Naive thymus-derived CD4-positive, alpha-beta T cell (primary cell): ENCODE measurements at regions of chr5 and their contacts with region 1.

Region 1: DNA sequence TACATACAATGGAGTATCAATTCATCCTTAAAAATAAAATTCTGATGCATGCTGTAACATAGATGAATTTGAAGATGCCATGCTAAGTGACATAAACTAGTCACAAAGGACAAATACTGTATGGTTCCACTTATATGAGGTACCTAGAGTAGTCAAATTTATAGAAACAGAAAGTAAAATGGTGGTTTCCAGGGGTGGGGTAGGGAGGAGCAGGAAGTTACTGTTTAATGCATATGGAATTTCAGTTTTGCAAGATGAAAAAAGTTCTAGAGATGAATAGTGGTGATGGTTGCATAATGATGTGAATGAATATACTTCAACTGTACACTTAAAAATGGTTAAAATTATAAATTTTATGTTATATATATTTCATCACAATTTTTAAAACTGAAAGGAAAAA is 57.3 kb upstream of the FNIP1 start:
- DNase-seq: peak in 2 of 9 donors; percentile 3 to 4
- ATAC-seq: no peak
- H3K4me3 ChIP-seq: no peak overlapping the region
- H3K4me3 Mint-ChIP-seq: peak overlapping the region in 4 of 10 donors; percentile 6 to 72 (median 21)
- H3K27ac ChIP-seq: no peak overlapping the region
- H3K27ac Mint-ChIP-seq: peak overlapping the region in 3 of 9 donors; percentile 2 to 50 (median 17)
- H3K4me1 ChIP-seq: peaks cover 4 to 5% of the 10 kb centered on the region in 2 donors
- H3K4me1 Mint-ChIP-seq: peaks cover 14 to 26% (median 20%) of the 10 kb centered on the region in 7 donors
- H3K27me3 ChIP-seq: no peaks in the 10 kb centered on the region
- H3K27me3 Mint-ChIP-seq: peaks cover 0 to 18% (median 0%) of the 10 kb centered on the region in 5 donors

Region 2: DNA sequence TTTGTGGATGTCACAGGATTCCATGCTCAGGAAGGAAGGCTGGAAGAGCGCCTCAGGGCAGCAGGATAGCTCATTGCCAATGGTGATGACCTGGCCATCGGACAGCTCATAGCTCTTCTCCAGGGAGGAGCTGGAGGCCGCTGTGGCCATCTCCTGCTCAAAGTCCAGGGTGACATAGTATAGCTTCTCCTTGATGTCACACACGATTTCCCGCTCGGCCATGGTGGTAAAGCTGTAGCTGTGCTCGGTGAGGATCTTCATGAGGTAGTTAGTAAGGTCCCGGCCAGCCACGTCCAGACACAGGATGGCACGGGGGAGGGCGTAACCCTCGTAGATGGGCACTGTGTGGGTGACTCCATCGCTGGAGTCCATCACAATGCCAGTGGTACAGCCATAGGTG is 194.8 kb before region 1 on chr5:
- CTCF ChIA-PET with region 1: no interaction called
- POLR2A ChIA-PET with region 1: no interaction called
- intact Hi-C with region 1: no loop called
- DNase-seq: no peak
- ATAC-seq: no peak
- H3K4me3 ChIP-seq: no peak overlapping the region
- H3K4me3 Mint-ChIP-seq: no peak overlapping the region
- H3K27ac ChIP-seq: no peak overlapping the region
- H3K27ac Mint-ChIP-seq: no peak overlapping the region
- H3K4me1 ChIP-seq: no peaks in the 10 kb centered on the region
- H3K4me1 Mint-ChIP-seq: peaks cover 3 to 22% (median 7%) of the 10 kb centered on the region in 7 donors
- H3K27me3 ChIP-seq: no peaks in the 10 kb centered on the region
- H3K27me3 Mint-ChIP-seq: no peaks in the 10 kb centered on the region

Region 3: DNA sequence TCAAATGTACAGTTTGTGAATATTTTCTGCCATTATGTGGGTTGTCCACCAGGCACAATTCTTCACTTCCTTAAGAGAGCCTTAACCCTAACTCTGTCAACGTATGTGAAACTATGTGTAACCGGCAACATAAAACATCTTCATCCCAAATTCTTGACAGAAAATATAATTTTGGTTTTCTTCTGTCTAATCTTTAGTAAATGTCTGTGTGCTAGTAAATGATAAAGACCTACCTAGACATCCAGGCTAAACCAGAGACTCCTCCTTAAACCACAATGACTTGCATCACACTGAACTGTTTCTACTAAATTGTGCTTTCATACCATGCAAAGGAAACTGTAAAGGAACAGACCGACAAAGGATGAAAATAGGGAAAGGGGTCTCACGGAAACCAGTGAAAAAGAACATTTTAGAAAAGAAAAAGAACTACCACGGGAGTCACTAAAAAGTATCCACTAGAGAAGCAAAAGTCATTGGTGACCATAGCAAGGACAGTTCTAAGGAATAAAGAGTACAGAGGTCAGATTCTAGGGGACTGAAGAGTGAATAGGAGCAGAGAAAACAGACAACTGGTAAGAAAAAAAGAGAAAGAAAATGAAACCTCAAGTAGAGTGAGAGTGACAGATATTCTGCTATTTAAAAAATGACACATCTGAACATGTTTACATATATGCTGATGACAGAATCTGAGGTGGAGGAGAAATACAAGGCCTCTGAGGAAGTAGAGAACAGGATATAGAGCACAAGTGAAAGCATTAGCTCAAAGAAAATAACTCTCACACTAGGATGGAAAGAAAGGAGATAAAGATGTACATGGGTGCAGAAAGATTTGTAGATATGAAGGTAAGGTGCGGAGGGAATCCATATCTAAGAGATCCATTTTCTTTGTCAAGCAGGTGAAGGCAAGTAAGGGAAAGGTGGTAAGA is 106.7 kb before region 1 on chr5:
- CTCF ChIA-PET with region 1: no interaction called
- POLR2A ChIA-PET with region 1: no interaction called
- intact Hi-C with region 1: loop called in 1 of 2 experiments (anchors 5 kb)
- DNase-seq: peak in 7 of 9 donors; percentile 21 to 64 (median 48)
- ATAC-seq: peak; percentile 80
- H3K4me3 ChIP-seq: no peak overlapping the region
- H3K4me3 Mint-ChIP-seq: peak overlapping the region; percentile 14 to 80 (median 68)
- H3K27ac ChIP-seq: peak overlapping the region; percentile 63
- H3K27ac Mint-ChIP-seq: peak overlapping the region; percentile 84 to 96 (median 89)
- H3K4me1 ChIP-seq: peaks cover 10 to 11% of the 10 kb centered on the region in 2 donors
- H3K4me1 Mint-ChIP-seq: peaks cover 28 to 57% (median 51%) of the 10 kb centered on the region in 7 donors
- H3K27me3 ChIP-seq: no peaks in the 10 kb centered on the region
- H3K27me3 Mint-ChIP-seq: no peaks in the 10 kb centered on the region

Region 4: DNA sequence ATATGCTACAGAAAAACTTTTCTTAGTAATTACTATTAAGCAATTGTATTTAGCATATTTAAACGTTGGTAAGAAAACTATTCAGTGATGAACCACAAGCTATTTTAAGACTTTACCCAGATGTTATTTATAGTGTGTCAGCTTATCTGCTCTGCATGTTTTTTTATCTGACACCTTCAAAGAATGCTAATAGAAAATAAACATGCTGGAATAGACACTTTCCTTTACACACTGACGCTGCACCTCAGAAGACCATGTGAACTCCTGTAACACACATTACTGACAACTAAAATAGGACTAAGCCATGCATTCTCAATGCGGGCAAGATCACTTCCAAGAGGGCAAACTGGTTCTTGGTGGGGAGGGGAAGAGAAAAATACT is 95.6 kb before region 1 on chr5:
- CTCF ChIA-PET with region 1: no interaction called
- POLR2A ChIA-PET with region 1: no interaction called
- intact Hi-C with region 1: no loop called
- DNase-seq: no peak
- ATAC-seq: no peak
- H3K4me3 ChIP-seq: no peak overlapping the region
- H3K4me3 Mint-ChIP-seq: peak overlapping the region in 6 of 10 donors; percentile 2 to 66 (median 24)
- H3K27ac ChIP-seq: no peak overlapping the region
- H3K27ac Mint-ChIP-seq: peak overlapping the region in 6 of 9 donors; percentile 2 to 72 (median 42)
- H3K4me1 ChIP-seq: peaks cover 0 to 13% of the 10 kb centered on the region in 2 donors
- H3K4me1 Mint-ChIP-seq: peaks cover 15 to 56% (median 34%) of the 10 kb centered on the region in 7 donors
- H3K27me3 ChIP-seq: no peaks in the 10 kb centered on the region
- H3K27me3 Mint-ChIP-seq: no peaks in the 10 kb centered on the region